ENCODE measurements at regions of chr11 and their contacts with region 1.

Region 1: DNA sequence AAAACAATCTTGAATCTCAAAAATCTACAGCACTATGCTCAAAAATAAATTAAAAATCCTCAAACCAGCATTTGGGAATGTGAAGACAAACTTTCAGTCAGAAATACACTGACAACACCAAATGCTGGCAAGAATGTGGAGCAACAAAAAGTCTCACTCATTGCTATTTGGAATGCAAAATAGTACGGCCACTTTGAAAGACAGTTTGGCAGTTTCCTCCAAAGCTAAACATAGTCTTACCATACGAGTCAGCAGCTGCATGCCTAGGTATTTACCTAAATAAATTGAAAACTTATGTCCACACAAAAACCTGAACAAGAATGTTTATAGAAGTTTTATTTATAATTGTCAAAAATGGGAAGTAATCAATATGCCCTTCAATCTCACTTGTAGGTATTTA is 904.2 kb upstream of the LRRC4C start:
- DNase-seq: no peak
- ATAC-seq: no peak
- H3K4me3 ChIP-seq: no peak overlapping the region
- H3K27ac ChIP-seq: no peak overlapping the region
- H3K4me1 ChIP-seq: no peaks in the 10 kb centered on the region
- H3K27me3 ChIP-seq: no peaks in the 10 kb centered on the region
- CTCF ChIP-seq: no peak
- POLR2A ChIP-seq: no peak

Region 2: DNA sequence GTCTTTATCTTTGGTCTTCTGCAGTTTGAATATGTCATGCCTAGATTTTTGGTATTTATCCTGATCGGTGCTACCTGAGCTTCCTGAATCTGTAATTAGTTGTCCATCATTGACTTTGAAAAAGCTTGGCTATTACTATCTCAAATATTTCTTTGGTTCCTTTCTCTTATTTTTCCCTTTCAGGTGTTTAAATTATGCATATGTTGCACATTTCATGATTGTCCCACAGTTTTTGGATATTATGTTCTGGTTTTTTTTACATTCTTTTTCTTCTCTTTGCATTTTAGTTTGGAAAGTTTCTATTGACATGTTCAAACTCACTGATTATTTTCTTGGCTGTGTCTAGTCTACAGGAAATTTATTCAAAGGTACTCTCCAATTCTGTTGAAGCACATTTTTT is 63.9 kb before region 1 on chr11:
- intact Hi-C with region 1: loop called in 1 of 10 experiments (anchors 10 kb)
- DNase-seq: no peak
- ATAC-seq: no peak
- H3K4me3 ChIP-seq: no peak overlapping the region
- H3K27ac ChIP-seq: no peak overlapping the region
- H3K4me1 ChIP-seq: no peaks in the 10 kb centered on the region
- H3K27me3 ChIP-seq: no peaks in the 10 kb centered on the region
- CTCF ChIP-seq: no peak
- POLR2A ChIP-seq: no peak